Right cardiac atrium (tissue), 5 donors: ENCODE measurements at regions of chr15 and their contacts with region 1.

Region 1: DNA sequence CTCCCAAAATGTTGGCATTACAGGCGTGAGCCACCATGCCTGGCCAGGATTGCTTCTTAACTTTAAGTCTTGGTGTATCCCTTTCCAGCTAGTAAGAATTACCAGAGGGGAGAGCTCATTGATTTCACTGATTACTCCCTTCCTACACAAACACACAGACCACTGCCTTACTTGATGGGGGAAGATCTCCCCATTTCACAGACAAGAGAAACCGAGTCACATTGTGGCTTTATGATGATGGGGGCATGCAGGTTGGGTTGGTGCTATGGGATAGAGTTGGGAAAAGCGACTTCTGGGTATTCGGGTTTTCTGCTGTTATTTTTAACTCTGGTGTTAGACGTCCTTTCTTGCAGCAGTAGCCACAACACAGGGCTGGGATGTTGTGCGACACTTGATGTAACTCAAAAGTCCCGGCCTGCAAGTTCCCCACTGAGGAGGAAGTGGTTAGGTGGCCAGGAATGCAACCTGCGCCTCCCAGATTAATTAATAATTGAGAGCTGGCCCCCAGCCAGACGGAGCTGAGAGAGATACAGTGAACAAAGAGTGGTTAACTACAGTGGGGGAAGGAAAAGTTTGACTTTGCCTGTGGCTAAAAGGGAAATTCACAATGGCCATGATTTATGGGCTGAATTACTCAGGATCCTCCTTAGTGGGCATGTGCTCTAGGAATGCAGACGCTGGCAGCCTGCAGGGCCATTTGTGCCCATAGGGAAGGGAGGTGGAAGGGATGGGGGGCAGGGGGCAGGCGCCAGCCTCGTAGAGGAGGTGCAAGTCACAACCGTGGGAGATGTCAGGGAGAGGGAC is 63.6 kb downstream of the SMAD6 start:
- DNase-seq: peak in 2 of 3 donors; percentile 46 to 75
- ATAC-seq: no peak
- H3K4me3 ChIP-seq: no peak overlapping the region
- H3K27ac ChIP-seq: peak overlapping the region; percentile 75
- H3K4me1 ChIP-seq: peaks cover 61% of the 10 kb centered on the region
- H3K27me3 ChIP-seq: no peaks in the 10 kb centered on the region

Region 2: GRCh38 chr15:66306381-66306780 is 459.3 kb before region 1 on chr15:
- intact Hi-C with region 1: no loop called
- DNase-seq: no peak
- ATAC-seq: no peak
- H3K4me3 ChIP-seq: no peak overlapping the region
- H3K27ac ChIP-seq: no peak overlapping the region
- H3K4me1 ChIP-seq: no peaks in the 10 kb centered on the region
- H3K27me3 ChIP-seq: no peaks in the 10 kb centered on the region

Region 3: DNA sequence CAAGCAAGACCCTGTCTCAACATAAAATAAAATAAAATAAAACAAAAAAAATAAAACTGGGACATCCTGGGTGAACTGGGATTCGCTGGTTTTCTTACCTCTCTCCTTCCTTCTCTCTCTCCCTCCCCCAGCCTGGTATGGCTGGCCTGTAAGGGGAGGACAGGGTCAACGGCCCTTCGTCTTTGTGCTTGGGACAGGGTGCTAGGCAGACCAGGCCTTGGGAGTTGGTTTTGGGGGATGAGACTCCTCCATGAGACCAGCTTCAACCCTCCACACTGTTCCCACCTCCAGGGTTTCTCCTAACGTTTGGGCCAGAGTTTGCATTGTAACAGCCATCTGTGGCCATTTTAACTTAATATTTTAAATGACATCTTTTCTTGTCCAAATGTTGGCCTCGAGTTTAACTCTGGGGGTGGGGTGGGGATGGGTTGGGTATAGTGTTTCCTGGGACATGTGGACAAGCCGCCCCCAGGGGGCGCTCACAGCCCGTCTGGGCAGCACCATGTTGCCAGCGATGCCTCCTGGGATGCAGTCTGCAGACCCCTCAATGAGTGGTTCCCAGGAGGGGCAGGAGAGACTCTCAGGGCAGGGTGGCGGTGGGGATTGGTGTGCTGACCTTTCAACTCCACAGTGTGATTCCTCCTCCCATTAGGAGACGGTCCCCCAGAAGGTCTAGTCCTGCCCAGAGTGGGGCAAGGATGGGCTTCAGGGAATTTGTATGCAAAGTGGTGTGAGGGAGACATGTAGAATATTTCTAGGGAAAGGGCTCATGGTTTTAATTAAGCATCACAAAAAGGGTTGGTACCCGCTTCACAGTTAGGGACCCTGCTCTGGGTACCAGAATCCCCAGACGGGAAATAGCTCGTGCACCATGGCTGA is 162.1 kb before region 1 on chr15:
- intact Hi-C with region 1: loop called in 3 of 4 experiments (anchors 5 to 10 kb)
- DNase-seq: peak; percentile 75 to 93 (median 90)
- ATAC-seq: peak; percentile 89 to 90
- H3K4me3 ChIP-seq: no peak overlapping the region
- H3K27ac ChIP-seq: no peak overlapping the region
- H3K4me1 ChIP-seq: no peaks in the 10 kb centered on the region
- H3K27me3 ChIP-seq: no peaks in the 10 kb centered on the region

Region 4: GRCh38 chr15:66700802-66701421 is 64.8 kb before region 1 on chr15:
- intact Hi-C with region 1: loop called (anchors 5 kb)
- DNase-seq: peak; percentile 97 to 99 (median 99)
- ATAC-seq: peak; percentile 76 to 78
- H3K4me3 ChIP-seq: peak overlapping the region; percentile 95
- H3K27ac ChIP-seq: peak overlapping the region; percentile 99
- H3K4me1 ChIP-seq: peaks cover 4% of the 10 kb centered on the region
- H3K27me3 ChIP-seq: no peaks in the 10 kb centered on the region

Region 5: DNA sequence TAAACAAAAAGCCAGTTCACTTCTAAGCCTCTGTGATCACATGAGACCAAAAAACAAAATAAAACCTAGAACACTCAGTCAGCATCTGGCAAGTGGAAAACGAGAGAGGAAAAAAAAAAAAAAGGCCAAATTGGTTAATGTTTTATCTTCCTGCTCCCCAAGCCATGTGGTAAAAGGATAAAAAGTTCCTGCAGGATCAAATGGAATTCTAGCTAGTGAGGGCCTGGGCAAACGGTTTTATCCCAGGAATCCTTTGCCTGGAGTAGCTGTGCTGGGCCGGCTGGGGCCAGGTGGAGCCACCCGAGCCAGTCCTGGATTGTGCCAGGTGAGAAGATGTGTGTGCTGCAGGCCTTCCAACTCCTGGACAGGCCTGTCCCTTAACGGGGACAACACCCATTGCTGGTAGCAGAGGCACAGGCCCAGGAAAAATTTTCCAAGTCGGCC is 50.5 kb before region 1 on chr15:
- intact Hi-C with region 1: loop called in 2 of 4 experiments (anchors 5 kb)
- DNase-seq: no peak
- ATAC-seq: no peak
- H3K4me3 ChIP-seq: no peak overlapping the region
- H3K27ac ChIP-seq: peak overlapping the region; percentile 74
- H3K4me1 ChIP-seq: peaks cover 47% of the 10 kb centered on the region
- H3K27me3 ChIP-seq: no peaks in the 10 kb centered on the region